Vagina (tissue), 2 donors: ENCODE measurements at regions of chr11 and their contacts with region 1.

Region 1: GRCh38 chr11:58579192-58580129 is 598 bp downstream of the ZFP91 start:
- DNase-seq: peak in 1 of 2 donors; percentile 97
- H3K4me3 ChIP-seq: peak overlapping the region; percentile 80 to 97
- H3K27ac ChIP-seq: peak overlapping the region; percentile 100
- H3K4me1 ChIP-seq: peaks cover 72% of the 10 kb centered on the region
- H3K27me3 ChIP-seq: no peaks in the 10 kb centered on the region
- CTCF ChIP-seq: peak; percentile 68 to 83 (median 82)
- POLR2A ChIP-seq: peak in 1 of 2 donors; percentile 41

Region 2: GRCh38 chr11:57311109-57311936 is 1268.1 kb before region 1 on chr11:
- intact Hi-C with region 1: loop called (anchors 5 kb)
- DNase-seq: peak in 1 of 2 donors; percentile 99
- H3K4me3 ChIP-seq: peak overlapping the region; percentile 50 to 57
- H3K27ac ChIP-seq: peak overlapping the region; percentile 93
- H3K4me1 ChIP-seq: peaks cover 85% of the 10 kb centered on the region
- H3K27me3 ChIP-seq: no peaks in the 10 kb centered on the region
- CTCF ChIP-seq: peak in 1 of 3 experiments; percentile 4
- POLR2A ChIP-seq: peak in 1 of 2 donors; percentile 71

Region 3: DNA sequence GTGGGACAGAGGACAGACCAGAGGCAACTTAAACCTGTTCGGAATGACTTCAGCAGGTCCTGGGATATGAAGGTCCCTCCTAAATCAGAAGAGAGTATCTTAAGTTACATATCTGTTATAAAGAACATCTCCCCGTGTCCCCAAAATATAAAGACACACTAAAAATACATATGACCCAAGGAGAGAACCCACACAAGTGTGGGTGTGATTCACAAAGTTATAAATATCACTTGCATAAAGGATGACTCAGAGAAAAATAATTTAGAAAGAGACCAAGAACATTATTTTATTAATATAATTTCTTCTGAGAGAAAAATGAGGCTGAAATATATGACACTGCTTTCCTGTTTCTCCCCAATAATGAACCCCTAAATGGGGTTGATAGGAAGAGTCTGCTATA is 85.8 kb before region 1 on chr11:
- intact Hi-C with region 1: no loop called
- DNase-seq: no peak
- H3K4me3 ChIP-seq: no peak overlapping the region
- H3K27ac ChIP-seq: no peak overlapping the region
- H3K4me1 ChIP-seq: no peaks in the 10 kb centered on the region
- H3K27me3 ChIP-seq: no peaks in the 10 kb centered on the region
- CTCF ChIP-seq: no peak
- POLR2A ChIP-seq: no peak

Region 4: DNA sequence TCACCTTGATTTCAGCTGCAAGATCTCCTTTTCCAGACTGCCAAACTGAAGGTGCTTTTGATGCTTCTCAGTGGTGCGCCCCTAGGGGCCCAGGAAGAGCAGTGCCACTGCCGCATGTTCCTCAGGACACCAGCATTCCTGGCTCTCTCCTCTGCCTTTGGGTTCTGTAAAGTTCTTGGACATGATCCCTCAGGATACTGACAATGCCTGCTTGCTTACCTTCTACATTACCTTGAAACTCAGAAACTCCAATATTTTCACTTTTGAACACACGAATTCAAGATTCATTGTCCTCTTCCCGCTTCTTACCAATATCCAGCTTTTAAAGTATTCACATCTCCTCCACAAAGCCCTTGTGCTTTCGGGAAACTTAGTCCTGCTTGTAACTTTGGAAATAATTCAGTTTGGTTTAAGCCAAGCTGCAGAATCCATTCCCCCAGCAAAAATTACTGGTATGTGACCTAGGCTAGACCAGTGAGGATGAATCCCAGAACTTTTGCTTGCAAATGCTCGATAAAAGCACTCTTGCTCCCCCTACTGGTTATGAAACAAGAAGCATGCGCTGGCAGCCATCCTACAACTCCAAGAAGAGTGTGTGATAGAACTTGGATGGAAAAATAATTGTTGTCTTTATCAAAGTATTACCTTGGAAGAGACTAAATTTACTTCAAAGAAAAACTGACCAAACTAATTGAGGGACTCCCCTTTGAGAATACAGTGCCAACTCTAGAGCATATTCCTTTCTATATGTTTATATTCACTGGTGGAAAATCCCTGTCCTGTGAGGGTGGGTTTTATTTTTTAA is 55.0 kb before region 1 on chr11:
- intact Hi-C with region 1: no loop called
- DNase-seq: no peak
- H3K4me3 ChIP-seq: peak overlapping the region in 1 of 2 donors; percentile 17
- H3K27ac ChIP-seq: no peak overlapping the region
- H3K4me1 ChIP-seq: no peaks in the 10 kb centered on the region
- H3K27me3 ChIP-seq: no peaks in the 10 kb centered on the region
- CTCF ChIP-seq: peak; percentile 49 to 62 (median 61)
- POLR2A ChIP-seq: no peak

Region 5: GRCh38 chr11:59142530-59143507 is 563.4 kb after region 1 on chr11 and contains the start of gene FAM111A:
- intact Hi-C with region 1: loop called (anchors 5 kb)
- DNase-seq: no peak
- H3K4me3 ChIP-seq: peak within 1 kb of the TSS; percentile 75 to 79
- H3K27ac ChIP-seq: peak within 1 kb of the TSS; percentile 95
- H3K4me1 ChIP-seq: peaks cover 16% of the 10 kb centered on the region
- H3K27me3 ChIP-seq: no peaks in the 10 kb centered on the region
- CTCF ChIP-seq: no peak
- POLR2A ChIP-seq: peak in 1 of 2 donors; percentile 11
- total RNA-seq, gene FAM111A: 51.8 TPM